AG04450 (cell line): ENCODE measurements at regions of chr20 and their contacts with region 1.

Region 1: GRCh38 chr20:36792422-36792821 is 18.9 kb upstream of the DSN1 start:
- DNase-seq: peak; percentile 42
- H3K4me3 ChIP-seq: no peak overlapping the region
- H3K27ac ChIP-seq: no peak overlapping the region
- H3K27me3 ChIP-seq: no peaks in the 10 kb centered on the region
- CTCF ChIP-seq: peak; percentile 63

Region 2: GRCh38 chr20:36802326-36803222 is 10.2 kb after region 1 on chr20:
- CTCF ChIA-PET with region 1: interaction called, 16 read pairs
- POLR2A ChIA-PET with region 1: interaction called, 14 read pairs
- DNase-seq: peak; percentile 66
- H3K4me3 ChIP-seq: no peak overlapping the region
- H3K27ac ChIP-seq: peak overlapping the region; percentile 47
- H3K27me3 ChIP-seq: no peaks in the 10 kb centered on the region
- CTCF ChIP-seq: no peak

Region 3: DNA sequence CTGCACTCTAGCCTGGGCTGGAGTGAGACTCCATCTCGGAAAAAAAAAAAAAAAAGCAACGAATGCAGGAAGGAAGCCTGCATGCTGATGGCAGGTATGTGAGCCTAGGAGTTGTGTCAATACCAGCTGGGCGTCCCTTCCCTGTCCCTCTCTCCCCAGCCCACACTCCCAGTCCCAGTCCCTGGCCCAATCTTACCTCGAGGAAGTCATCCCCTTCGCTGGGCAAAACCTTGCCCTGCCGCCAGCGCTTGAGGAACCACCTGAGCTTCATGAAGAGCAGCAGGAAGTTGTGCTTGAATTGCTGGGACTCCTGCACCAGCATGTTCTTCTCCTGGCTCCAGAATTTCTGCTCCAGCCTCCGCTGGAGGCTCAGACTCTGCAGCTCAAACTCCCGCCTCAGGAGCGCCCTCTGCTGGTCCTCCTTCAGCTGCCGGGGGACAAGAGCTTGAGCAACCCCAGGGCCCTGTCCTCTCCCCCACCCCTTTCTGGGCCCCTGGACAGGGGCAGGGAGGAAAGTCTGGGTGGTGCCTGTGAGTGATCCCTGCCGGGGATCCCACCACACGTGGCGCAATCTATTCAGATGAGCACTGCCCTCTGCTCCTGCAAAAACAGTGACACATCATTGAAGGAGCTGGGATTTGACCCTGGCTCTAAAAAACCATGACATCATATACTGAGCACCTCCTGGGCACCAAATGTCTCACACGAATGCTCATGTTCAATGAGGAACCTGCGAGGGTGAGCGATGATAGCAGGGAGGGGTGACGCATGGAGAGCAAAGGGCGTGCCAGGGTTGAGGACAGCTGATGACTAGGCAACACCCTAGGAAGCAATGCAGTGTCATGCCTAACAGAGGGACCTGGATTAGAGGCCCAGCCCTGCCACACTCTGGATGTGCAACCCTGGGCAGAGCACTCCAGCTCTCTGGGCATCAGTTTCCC is 16.2 kb after region 1 on chr20:
- CTCF ChIA-PET with region 1: interaction called, 16 read pairs
- POLR2A ChIA-PET with region 1: interaction called, 6 read pairs
- DNase-seq: peak; percentile 38
- H3K4me3 ChIP-seq: no peak overlapping the region
- H3K27ac ChIP-seq: peak overlapping the region; percentile 52
- H3K27me3 ChIP-seq: no peaks in the 10 kb centered on the region
- CTCF ChIP-seq: peak; percentile 73

Region 4: GRCh38 chr20:36886859-36887751 is 94.7 kb after region 1 on chr20:
- CTCF ChIA-PET with region 1: interaction called, 10 read pairs
- POLR2A ChIA-PET with region 1: no interaction called
- DNase-seq: peak; percentile 36
- H3K4me3 ChIP-seq: peak overlapping the region; percentile 18; the same call in 1 of the 2 replicates
- H3K27ac ChIP-seq: no peak overlapping the region
- H3K27me3 ChIP-seq: no peaks in the 10 kb centered on the region
- CTCF ChIP-seq: peak; percentile 99

Region 5: DNA sequence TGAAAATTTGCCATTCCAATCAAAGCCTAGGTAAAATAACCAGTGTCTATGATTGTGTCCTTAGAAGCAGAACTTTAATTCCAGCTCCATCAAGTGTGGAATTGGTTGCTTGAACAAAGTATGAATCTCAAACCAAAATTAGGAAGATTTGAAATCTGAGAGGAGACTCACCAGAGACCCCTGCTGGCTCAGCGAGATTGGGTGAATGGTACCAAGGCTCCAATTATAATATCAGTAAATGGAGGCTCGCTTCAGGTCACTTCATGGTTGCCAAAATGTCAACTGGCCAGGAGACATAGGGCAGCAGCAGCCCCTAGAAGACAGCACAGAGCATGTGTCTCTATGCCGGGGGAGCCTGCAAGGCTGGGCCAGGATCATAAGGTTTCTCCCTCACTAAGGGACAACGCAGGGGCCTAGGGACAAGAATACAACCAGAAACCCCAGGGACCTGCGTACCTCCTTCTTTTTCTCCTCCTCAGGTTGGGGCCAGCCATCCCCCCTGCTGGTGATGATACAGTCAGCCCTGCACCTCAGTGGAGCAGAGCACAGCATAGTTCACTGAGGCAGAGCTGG is 289.4 kb after region 1 on chr20:
- CTCF ChIA-PET with region 1: no interaction called
- POLR2A ChIA-PET with region 1: no interaction called
- DNase-seq: no peak
- H3K4me3 ChIP-seq: no peak overlapping the region
- H3K27ac ChIP-seq: no peak overlapping the region
- H3K27me3 ChIP-seq: no peaks in the 10 kb centered on the region
- CTCF ChIP-seq: peak; percentile 59